ENCODE measurements at regions of chr17 and their contacts with region 1.

Region 1: DNA sequence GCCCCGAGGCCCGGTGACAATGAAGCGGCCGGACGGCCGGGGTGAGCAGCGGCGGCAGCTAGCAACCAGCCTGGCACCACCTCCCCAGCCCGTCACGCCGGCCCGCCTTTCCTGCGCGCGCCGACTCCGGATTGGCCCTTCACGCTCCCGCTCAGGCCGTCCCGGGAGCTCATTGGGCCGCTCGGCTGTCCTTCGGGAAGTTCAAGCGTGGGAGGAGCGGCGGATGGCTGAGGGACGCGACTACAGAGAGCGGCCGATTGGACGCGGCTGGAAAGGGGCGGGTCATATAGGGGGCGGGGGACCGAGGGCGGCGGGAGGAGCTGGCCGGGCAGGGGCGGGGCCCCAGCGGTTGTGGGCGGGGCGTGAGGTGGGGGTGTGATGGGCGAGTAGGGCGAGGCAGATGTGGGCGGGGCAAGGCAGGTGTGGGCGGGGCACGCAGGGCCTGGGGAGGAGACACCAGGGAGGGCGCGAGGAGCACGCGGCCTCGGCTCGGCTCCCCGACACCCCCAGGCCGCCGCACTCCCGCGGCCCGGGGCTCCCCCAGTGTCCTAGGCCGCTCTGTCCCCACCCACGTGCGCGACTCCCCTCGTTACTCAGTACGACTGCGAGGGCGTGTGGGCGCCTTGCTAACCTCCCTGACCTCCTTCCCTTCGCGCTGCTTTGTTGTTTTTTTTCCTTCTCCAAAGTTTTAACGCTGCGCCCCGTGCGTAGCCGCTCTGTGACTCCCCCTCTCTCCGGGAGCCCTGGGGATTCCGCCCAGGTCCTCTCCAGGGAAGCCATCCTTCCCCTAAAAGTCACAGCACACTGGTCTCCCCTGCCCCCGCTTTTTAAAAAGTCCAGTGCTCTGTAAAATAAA is at the start of gene CEP131:
- DNase-seq: peak; percentile 100
- ATAC-seq: peak; percentile 95 to 99
- H3K4me3 ChIP-seq: peak within 1 kb of the TSS; percentile 79
- H3K27ac ChIP-seq: peak within 1 kb of the TSS; percentile 70 to 88
- H3K4me1 ChIP-seq: peaks cover 9% of the 10 kb centered on the region
- CTCF ChIP-seq: no peak
- EP300 ChIP-seq: no peak
- POLR2A ChIP-seq: peak; percentile 87
- RAD21 ChIP-seq: no peak
- polyA plus RNA-seq, gene CEP131: 2.6 and 3.3 TPM in 2 replicates

Region 2: DNA sequence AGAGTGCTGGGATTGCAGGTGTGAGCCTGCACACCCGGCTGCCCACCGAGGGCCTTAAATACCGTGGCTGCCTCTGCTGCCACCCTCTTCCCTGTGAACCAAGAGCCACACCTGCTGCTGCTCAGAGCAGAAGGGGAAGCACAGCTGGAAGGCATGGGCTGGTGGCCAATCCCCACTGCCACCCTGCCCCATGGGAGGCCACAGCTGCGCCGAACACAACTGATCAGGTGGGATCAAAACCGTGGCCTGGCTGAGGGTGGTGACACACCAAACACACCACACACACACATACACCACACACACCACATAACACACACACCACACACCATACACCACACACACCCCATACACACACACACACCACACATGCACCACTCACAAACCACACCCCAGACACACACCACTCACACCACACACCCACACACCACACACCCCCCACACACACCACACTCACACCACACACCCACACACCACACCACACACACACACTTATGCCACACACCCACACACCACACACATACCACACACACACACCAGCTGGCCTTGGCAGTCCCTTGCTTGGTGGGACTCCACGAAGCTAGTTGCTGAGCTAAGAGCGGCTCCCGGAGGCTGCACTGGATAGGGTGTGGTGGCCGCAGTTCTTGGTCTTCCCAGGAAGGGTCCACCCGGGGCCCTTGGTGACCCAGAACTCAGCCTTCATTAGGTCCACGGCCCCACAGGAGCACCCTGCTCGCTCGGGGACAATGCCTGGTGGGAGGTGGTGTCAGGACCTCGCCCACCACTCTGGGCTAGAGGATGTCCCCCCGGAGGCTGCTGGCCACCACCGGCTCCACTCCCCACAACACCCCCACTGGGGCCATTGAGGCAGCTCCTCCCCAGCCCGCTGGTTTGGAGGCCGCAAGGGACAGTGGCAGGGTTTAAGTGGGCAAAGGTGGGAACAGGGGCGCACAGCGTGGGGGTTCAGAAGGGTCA is 15.2 kb before region 1 on chr17:
- CTCF ChIA-PET with region 1: interaction called, 19 read pairs
- POLR2A ChIA-PET with region 1: no interaction called
- DNase-seq: no peak
- ATAC-seq: no peak
- H3K4me3 ChIP-seq: no peak overlapping the region
- H3K27ac ChIP-seq: no peak overlapping the region
- H3K4me1 ChIP-seq: no peaks in the 10 kb centered on the region
- CTCF ChIP-seq: no peak
- EP300 ChIP-seq: no peak
- POLR2A ChIP-seq: no peak
- RAD21 ChIP-seq: no peak

Region 3: GRCh38 chr17:81238817-81239600 is 15.9 kb after region 1 on chr17 and contains the starts of genes NDUFAF8 and TEPSIN:
- CTCF ChIA-PET with region 1: interaction called, 3 read pairs
- POLR2A ChIA-PET with region 1: interaction called, 23 read pairs
- DNase-seq: peak; percentile 100
- ATAC-seq: peak; percentile 88 to 97
- H3K4me3 ChIP-seq: peak within 1 kb of the TSS; percentile 80
- H3K27ac ChIP-seq: peak within 1 kb of the TSS; percentile 91 to 94
- H3K4me1 ChIP-seq: peaks cover 19% of the 10 kb centered on the region
- CTCF ChIP-seq: no peak
- EP300 ChIP-seq: no peak
- POLR2A ChIP-seq: peak; percentile 56
- RAD21 ChIP-seq: no peak
- polyA plus RNA-seq, gene NDUFAF8: 198 and 308 TPM in 2 replicates
- polyA plus RNA-seq, gene TEPSIN: 12.5 TPM in 2 replicates